PC-9 (cell line): ENCODE measurements at regions of chr22 and their contacts with region 1.

Region 1: DNA sequence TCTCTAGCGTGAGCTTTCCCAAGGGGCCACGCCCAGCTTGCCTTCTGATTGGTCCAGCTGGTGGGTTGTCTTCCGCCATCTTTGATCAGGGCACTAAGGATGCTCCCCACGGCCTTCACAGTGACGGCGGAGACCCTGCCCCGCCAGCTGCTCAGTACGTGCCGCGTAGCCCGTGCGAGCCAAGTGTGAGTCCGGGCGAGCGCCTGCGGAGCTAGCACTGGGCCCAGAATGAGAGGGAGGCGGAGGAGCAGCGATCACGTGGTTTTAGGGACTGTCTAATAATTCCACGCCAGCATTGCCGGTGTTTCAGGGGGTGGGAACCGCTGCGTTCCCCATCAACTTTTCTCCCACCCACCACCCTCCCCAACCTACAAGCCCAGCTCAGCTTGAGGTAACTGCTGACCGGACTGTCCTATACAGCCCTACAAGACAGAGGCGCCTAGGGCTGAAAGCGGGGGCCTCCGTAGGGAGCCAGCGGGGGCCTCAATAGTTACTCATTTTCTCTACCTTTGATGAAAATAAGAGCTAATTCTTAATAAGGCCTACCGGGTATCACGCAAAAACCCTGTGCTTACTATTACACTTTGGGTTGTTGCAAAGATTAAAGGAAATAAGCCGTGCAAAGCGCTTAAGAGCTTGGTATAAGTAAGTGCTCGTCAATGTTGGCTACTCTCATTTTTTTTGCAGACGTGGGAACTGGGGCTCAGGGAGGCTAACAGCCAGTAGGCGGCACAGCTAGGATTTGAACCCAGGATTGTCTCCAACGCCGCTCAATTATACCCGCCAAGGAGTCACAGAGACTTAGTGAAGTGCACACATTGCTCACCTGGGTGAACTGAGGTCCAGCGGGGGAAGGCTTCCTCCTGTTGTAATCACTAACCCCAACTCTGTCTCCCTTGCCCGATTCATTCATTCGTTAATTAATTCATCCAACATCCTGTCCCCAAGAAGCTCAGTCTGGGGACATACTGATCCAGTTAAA is 1.3 kb upstream of the MTFP1 start:
- DNase-seq: peak; percentile 98 to 99
- H3K4me3 ChIP-seq: peak overlapping the region; percentile 70
- H3K27ac ChIP-seq: peak overlapping the region; percentile 93
- H3K4me1 ChIP-seq: peaks cover 43% of the 10 kb centered on the region
- H3K27me3 ChIP-seq: no peaks in the 10 kb centered on the region
- CTCF ChIP-seq: peak; percentile 19; the same call in 1 of the 2 replicates

Region 2: GRCh38 chr22:30396871-30397655 is 27.2 kb before region 1 on chr22 and contains the start of gene SEC14L2:
- CTCF ChIA-PET with region 1: interaction called, 10 read pairs
- POLR2A ChIA-PET with region 1: interaction called, 20 read pairs
- intact Hi-C with region 1: loop called (anchors 1 kb)
- DNase-seq: peak; percentile 40 to 64
- H3K4me3 ChIP-seq: peak within 1 kb of the TSS; percentile 69
- H3K27ac ChIP-seq: no peak within 1 kb of the TSS
- H3K4me1 ChIP-seq: peaks cover 32% of the 10 kb centered on the region
- H3K27me3 ChIP-seq: no peaks in the 10 kb centered on the region
- CTCF ChIP-seq: no peak
- total RNA-seq, gene SEC14L2: 51.3 and 60.8 TPM in 2 replicates

Region 3: GRCh38 chr22:30408414-30409104 is 15.7 kb before region 1 on chr22:
- CTCF ChIA-PET with region 1: interaction called, 7 read pairs
- POLR2A ChIA-PET with region 1: interaction called, 13 read pairs
- intact Hi-C with region 1: loop called (anchors 1 kb)
- DNase-seq: peak; percentile 72 to 94
- H3K4me3 ChIP-seq: no peak overlapping the region
- H3K27ac ChIP-seq: peak overlapping the region; percentile 73
- H3K4me1 ChIP-seq: peaks cover 33% of the 10 kb centered on the region
- H3K27me3 ChIP-seq: no peaks in the 10 kb centered on the region
- CTCF ChIP-seq: no peak

Region 4: GRCh38 chr22:30471616-30472318 is 47.5 kb after region 1 on chr22 and contains the start of gene SEC14L3:
- CTCF ChIA-PET with region 1: no interaction called
- POLR2A ChIA-PET with region 1: no interaction called
- intact Hi-C with region 1: no loop called
- DNase-seq: no peak
- H3K4me3 ChIP-seq: no peak within 1 kb of the TSS
- H3K27ac ChIP-seq: no peak within 1 kb of the TSS
- H3K4me1 ChIP-seq: no peaks in the 10 kb centered on the region
- H3K27me3 ChIP-seq: peaks cover 40% of the 10 kb centered on the region
- CTCF ChIP-seq: no peak
- total RNA-seq, gene SEC14L3: not detected in 2 replicates

Region 5: GRCh38 chr22:30485362-30485988 is 61.2 kb after region 1 on chr22:
- CTCF ChIA-PET with region 1: interaction called, 3 read pairs
- POLR2A ChIA-PET with region 1: no interaction called
- intact Hi-C with region 1: loop called (anchors 1 kb)
- DNase-seq: peak; percentile 49 to 69
- H3K4me3 ChIP-seq: no peak overlapping the region
- H3K27ac ChIP-seq: no peak overlapping the region
- H3K4me1 ChIP-seq: no peaks in the 10 kb centered on the region
- H3K27me3 ChIP-seq: no peaks in the 10 kb centered on the region
- CTCF ChIP-seq: peak; percentile 99

Region 6: DNA sequence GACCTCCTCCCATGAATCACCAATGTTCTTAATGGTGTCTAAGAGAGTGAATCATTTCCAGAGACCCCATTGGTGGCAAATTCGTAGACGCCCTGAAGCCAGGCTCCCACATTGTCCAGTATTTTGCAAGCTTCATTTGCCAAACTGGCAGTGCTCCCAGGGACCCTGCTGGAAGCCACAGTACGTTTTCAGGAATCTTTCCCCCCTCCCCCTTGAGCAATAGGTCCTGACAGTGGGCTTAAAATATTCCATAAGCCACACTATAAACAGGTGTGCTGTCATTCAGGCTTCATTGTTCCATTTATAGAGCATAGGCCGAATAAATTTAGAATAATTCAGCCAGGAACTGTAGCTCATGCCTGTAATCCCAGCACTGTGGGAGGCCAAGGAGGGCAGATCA is 419.0 kb after region 1 on chr22:
- CTCF ChIA-PET with region 1: no interaction called
- POLR2A ChIA-PET with region 1: no interaction called
- intact Hi-C with region 1: no loop called
- DNase-seq: peak in 1 of 2 experiments; percentile 56
- H3K4me3 ChIP-seq: no peak overlapping the region
- H3K27ac ChIP-seq: 0 out of 2 replicates have a peak overlapping the region, but pooled peaks have one; percentile 2
- H3K4me1 ChIP-seq: peaks cover 46% of the 10 kb centered on the region
- H3K27me3 ChIP-seq: no peaks in the 10 kb centered on the region
- CTCF ChIP-seq: no peak